ENCODE measurements at regions of chr15 and their contacts with region 1.

Region 1: GRCh38 chr15:72312605-72313447 is 7.1 kb downstream of the CELF6 start:
- DNase-seq: peak; percentile 12 to 74 (median 60)
- ATAC-seq: peak; percentile 89
- H3K4me3 ChIP-seq: no peak overlapping the region
- H3K4me3 Mint-ChIP-seq: no peak overlapping the region
- H3K27ac ChIP-seq: no peak overlapping the region
- H3K27ac Mint-ChIP-seq: no peak overlapping the region
- H3K4me1 ChIP-seq: no peaks in the 10 kb centered on the region
- H3K4me1 Mint-ChIP-seq: no peaks in the 10 kb centered on the region
- H3K27me3 ChIP-seq: no peaks in the 10 kb centered on the region
- H3K27me3 Mint-ChIP-seq: no peaks in the 10 kb centered on the region
- CTCF ChIP-seq: peak; percentile 69

Region 2: GRCh38 chr15:72285927-72286516 is 26.8 kb before region 1 on chr15:
- CTCF ChIA-PET with region 1: interaction called, 10 read pairs
- POLR2A ChIA-PET with region 1: no interaction called
- intact Hi-C with region 1: no loop called
- DNase-seq: peak in 8 of 9 experiments; percentile 17 to 69 (median 58)
- ATAC-seq: peak; percentile 65
- H3K4me3 ChIP-seq: no peak overlapping the region
- H3K4me3 Mint-ChIP-seq: no peak overlapping the region
- H3K27ac ChIP-seq: no peak overlapping the region
- H3K27ac Mint-ChIP-seq: no peak overlapping the region
- H3K4me1 ChIP-seq: no peaks in the 10 kb centered on the region
- H3K4me1 Mint-ChIP-seq: no peaks in the 10 kb centered on the region
- H3K27me3 ChIP-seq: no peaks in the 10 kb centered on the region
- H3K27me3 Mint-ChIP-seq: no peaks in the 10 kb centered on the region
- CTCF ChIP-seq: peak; percentile 54

Measured in CD8-positive, alpha-beta T cell (primary cell).